Esophagus muscularis mucosa (tissue), 4 donors: ENCODE measurements at regions of chr17 and their contacts with region 1.

Region 1: DNA sequence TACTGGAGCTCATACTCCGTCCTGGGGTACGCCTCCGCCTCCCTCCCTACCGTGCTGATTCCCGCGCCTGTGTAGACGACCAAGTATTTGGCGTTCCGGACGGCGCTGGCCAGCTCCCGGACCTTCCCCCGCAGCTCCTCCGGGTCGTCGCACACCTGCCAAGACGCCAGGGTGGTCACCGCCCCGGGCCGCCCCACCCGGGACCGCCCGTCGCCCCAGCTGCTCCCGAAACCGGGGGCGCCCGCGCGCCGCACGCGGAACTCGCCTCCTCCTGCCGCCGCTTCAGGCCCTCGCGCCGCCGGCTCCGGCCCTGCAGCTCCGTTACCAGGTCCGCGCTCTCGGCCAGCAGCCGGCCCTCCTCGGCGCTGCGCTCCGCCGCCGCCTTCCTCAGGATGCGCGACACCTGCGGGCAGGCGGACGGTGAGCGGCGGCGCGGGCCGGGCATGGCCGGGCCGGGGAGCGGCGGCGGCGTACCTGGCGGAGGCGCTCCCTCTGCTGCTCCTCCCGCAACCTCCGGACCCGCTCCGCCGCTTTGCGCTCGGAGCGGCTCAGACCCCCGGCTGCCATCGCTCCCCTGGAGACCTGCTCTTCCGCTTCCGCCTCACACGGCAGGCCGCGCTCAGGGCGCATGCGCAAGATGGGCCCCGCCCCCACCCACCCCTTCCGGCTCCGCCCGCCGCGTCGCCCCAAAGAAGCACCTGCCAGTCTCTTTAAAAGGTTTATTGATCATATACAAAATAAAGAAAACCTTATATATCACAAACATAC is at the start of gene SIRT7:
- DNase-seq: peak; percentile 96
- H3K4me3 ChIP-seq: peak within 1 kb of the TSS; percentile 82 to 100 (median 91)
- H3K27ac ChIP-seq: peak within 1 kb of the TSS; percentile 69 to 87 (median 84)
- H3K4me1 ChIP-seq: peaks cover 19 to 71% (median 56%) of the 10 kb centered on the region in 4 donors
- H3K27me3 ChIP-seq: no peaks in the 10 kb centered on the region
- CTCF ChIP-seq: no peak
- EP300 ChIP-seq: no peak
- POLR2A ChIP-seq: no peak
- total RNA-seq, gene SIRT7: 13.9 to 27.0 (median 19.9) TPM

Region 2: GRCh38 chr17:81860756-81861518 is 56.8 kb before region 1 on chr17:
- intact Hi-C with region 1: loop called (anchors 5 kb)
- DNase-seq: peak; percentile 100
- H3K4me3 ChIP-seq: peak overlapping the region; percentile 74 to 89 (median 82)
- H3K27ac ChIP-seq: peak overlapping the region; percentile 93 to 97 (median 96)
- H3K4me1 ChIP-seq: peaks cover 44 to 74% (median 55%) of the 10 kb centered on the region in 4 donors
- H3K27me3 ChIP-seq: no peaks in the 10 kb centered on the region
- CTCF ChIP-seq: peak in 1 of 3 experiments; percentile 17
- EP300 ChIP-seq: no peak
- POLR2A ChIP-seq: peak; percentile 98